Endothelial cell of umbilical vein (primary cell): ENCODE measurements at regions of chr22 and their contacts with region 1.

Region 1: GRCh38 chr22:30694171-30694639 is 469 bp upstream of the OSBP2 start:
- DNase-seq: peak; percentile 57
- H3K4me3 ChIP-seq: peak overlapping the region; percentile 25 to 66 (median 51)
- H3K27ac ChIP-seq: peak overlapping the region; percentile 5
- H3K4me1 ChIP-seq: peaks cover 9% of the 10 kb centered on the region
- H3K27me3 ChIP-seq: no peaks in the 10 kb centered on the region
- CTCF ChIP-seq: peak in 1 of 2 donors; percentile 5
- POLR2A ChIP-seq: no peak

Region 2: DNA sequence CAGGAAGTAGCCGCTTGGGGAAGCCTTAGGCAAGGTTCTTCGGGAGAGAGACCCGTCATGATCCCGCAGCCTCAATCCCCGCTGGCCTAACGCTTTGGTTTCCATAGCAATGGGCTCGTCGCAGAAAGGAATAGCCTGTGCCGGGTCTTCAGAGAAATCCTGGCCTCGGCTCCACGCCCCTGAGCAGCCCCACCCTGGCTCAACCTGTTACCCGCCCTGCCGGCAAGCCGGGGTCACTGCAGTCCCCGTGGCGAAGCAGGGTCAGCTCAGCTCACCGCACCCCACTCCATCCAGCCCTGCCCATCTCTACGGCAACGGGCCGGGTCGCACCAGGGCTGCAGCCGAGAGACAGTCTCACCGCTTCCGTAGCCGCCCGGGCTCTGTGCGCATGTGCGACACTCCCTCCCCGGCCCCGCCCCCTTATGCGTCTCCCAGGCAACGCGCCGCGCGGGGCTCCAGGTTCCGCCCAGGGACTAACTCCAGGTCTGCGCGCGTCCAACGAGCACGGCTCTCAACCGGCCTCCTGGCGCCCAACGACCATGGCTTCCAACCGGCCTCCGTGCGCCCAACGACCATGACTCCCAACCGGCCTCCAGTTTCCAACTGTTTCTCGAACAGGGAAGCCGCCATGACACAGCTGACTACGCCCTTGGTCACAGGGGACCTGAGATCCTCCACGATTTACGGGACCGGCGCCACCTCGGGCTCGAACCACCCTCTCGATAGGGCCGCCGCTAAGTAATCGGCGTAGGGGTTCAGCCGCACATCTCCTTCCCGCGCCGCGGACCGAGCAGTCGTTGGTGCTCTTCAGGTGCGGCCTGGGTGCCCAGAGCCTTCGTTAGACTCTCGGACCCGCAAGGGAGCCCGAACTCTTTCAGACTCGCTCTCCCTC is 26.5 kb before region 1 on chr22 and contains the start of gene DUSP18:
- CTCF ChIA-PET with region 1: no interaction called
- POLR2A ChIA-PET with region 1: no interaction called
- dilution Hi-C with region 1: no loop called
- intact Hi-C with region 1: loop called (anchors 2 kb)
- DNase-seq: peak; percentile 94
- H3K4me3 ChIP-seq: peak within 1 kb of the TSS; percentile 35 to 71 (median 66)
- H3K27ac ChIP-seq: peak within 1 kb of the TSS; percentile 25
- H3K4me1 ChIP-seq: peaks cover 18% of the 10 kb centered on the region
- H3K27me3 ChIP-seq: no peaks in the 10 kb centered on the region
- CTCF ChIP-seq: peak; percentile 19 to 41
- POLR2A ChIP-seq: peak; percentile 77
- total RNA-seq, gene DUSP18: 17.5 and 18.3 TPM in 2 replicates

Region 3: GRCh38 chr22:30742291-30743256 is 48.4 kb after region 1 on chr22:
- CTCF ChIA-PET with region 1: interaction called, 3 read pairs
- POLR2A ChIA-PET with region 1: no interaction called
- dilution Hi-C with region 1: no loop called
- intact Hi-C with region 1: loop called (anchors 2 kb)
- DNase-seq: no peak
- H3K4me3 ChIP-seq: no peak overlapping the region
- H3K27ac ChIP-seq: no peak overlapping the region
- H3K4me1 ChIP-seq: peaks cover 17% of the 10 kb centered on the region
- H3K27me3 ChIP-seq: no peaks in the 10 kb centered on the region
- CTCF ChIP-seq: no peak
- POLR2A ChIP-seq: no peak

Region 4: DNA sequence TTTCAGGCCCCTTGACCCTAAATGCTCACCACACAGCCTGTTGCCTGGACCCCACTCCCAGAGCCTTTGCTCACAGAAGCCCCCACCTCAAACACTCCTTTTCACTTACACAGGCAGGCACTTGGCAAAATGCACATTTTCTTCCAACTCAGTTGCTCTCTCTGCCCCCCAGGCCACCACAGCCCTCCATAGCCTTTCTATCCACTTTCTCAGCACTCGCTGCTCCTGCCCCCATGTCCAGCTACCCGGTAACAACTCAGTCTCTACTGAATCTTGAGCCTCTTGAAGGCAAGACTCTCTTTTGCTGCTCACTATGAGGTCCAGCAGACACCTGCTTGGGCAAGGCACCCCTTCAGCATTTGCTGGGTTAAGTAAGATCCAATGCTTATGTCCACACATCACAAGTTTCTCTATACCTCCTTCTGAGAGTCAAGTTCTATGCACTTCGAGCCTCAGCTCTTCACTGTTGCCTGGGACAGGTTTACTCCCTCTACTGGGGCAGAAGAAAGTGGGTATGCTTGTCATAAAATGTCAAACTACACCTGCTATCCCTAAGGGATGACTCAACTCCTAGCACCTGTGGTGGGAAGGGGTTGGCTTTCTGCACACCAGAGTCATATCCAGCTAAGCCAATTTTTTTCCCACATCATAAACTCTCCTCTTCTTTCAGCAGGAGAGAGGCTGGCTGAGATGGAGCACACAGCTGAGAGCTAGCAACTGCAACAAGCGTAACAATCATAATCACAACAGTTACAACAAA is 237.5 kb after region 1 on chr22:
- CTCF ChIA-PET with region 1: no interaction called
- POLR2A ChIA-PET with region 1: no interaction called
- dilution Hi-C with region 1: loop called (anchors 10 kb)
- intact Hi-C with region 1: no loop called
- DNase-seq: no peak
- H3K4me3 ChIP-seq: no peak overlapping the region
- H3K27ac ChIP-seq: no peak overlapping the region
- H3K4me1 ChIP-seq: no peaks in the 10 kb centered on the region
- H3K27me3 ChIP-seq: no peaks in the 10 kb centered on the region
- CTCF ChIP-seq: no peak
- POLR2A ChIP-seq: no peak